PC-3 (cell line): ENCODE measurements at regions of chr14 and their contacts with region 1.

Region 1: GRCh38 chr14:60349663-60350365 is 100.8 kb downstream of the PPM1A start:
- DNase-seq: peak; percentile 90
- ATAC-seq: peak; percentile 82
- H3K4me3 ChIP-seq: no peak overlapping the region
- H3K27ac ChIP-seq: no peak overlapping the region
- H3K4me1 ChIP-seq: no peaks in the 10 kb centered on the region
- H3K27me3 ChIP-seq: peaks cover 15% of the 10 kb centered on the region
- CTCF ChIP-seq: peak; percentile 99

Region 2: GRCh38 chr14:60195179-60195810 is 154.5 kb before region 1 on chr14:
- CTCF ChIA-PET with region 1: no interaction called
- POLR2A ChIA-PET with region 1: no interaction called
- intact Hi-C with region 1: loop called (anchors 5 kb)
- DNase-seq: no peak
- ATAC-seq: peak; percentile 35
- H3K4me3 ChIP-seq: no peak overlapping the region
- H3K27ac ChIP-seq: no peak overlapping the region
- H3K4me1 ChIP-seq: peaks cover 26% of the 10 kb centered on the region
- H3K27me3 ChIP-seq: no peaks in the 10 kb centered on the region
- CTCF ChIP-seq: peak; percentile 49

Region 3: DNA sequence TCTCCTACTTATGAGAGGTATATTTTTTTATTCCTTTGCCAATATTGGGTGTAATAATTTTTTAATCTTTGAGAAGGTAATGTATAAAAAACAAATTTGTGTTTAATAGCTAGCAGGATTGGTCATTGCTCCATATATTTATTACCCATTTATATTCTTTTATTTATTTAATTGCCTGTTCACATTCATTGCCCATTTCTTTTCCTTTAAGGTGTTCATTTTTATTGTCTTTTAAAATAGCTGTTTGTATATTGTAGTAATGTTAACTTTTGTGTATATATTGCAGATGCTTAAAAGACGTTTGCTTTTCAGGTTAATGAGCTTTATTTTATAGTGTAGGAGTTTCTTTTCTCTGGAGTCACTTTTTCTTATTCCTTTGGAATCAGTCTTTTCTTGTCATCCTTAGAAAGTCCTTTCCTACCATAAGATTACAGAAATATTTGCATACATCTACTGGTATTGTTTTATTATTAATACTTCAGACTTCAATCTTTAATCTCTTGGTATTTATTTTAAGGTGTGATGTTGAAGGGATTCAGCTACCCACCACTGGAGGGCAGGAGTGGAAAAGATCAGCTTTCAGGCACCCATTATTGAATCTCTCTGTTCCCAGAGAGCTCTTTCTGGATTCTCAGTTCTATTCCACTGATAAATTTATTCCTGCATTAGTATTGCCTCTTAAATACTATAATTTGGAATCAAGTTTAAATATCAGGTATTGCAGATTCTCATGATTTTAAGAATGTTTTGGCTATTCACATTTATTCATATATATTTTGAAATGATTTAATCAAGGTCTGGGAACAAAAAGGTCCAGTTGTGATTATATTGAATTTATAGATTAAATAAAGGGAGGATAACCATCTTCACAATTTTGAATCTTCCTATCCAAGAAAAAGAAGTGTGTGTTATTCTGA is 83.5 kb before region 1 on chr14:
- CTCF ChIA-PET with region 1: interaction called, 10 read pairs
- POLR2A ChIA-PET with region 1: no interaction called
- intact Hi-C with region 1: loop called (anchors 1 kb)
- DNase-seq: peak; percentile 82
- ATAC-seq: peak; percentile 94
- H3K4me3 ChIP-seq: no peak overlapping the region
- H3K27ac ChIP-seq: no peak overlapping the region
- H3K4me1 ChIP-seq: peaks cover 5% of the 10 kb centered on the region; the same call in 1 of the 2 replicates
- H3K27me3 ChIP-seq: no peaks in the 10 kb centered on the region
- CTCF ChIP-seq: peak; percentile 100

Region 4: DNA sequence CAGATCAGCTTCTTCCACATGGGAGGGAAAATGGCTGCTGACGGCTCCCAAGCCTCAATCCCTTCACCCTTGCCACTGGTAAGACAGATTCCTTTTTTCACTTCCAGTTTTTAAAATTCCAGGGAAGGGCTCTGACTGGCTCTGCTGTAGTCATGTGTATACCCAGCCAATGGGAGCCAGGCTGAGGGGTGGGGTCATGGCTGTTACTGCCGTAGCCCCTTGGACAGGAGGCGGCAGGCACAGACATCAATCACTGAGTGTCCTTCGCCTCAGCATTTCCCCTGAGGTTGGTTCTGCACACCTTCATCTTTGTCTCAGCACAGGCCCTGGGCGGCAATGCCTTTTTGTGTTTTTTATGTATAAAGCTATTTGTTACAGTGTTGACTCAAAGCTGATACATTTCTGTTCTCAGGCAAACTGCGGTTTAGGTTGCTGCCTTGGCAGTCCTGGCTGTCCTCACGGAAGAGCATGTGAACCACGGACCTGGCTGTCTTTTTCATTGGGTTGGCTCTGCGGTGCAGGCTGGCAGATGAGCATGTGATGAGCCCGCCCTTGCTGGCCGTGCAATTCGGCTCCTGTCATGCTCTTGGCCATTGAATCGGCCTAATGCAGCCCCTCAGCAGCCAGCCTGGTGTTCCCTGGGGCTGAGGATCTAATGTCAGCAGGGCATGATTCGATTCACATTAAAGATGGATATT is 26.5 kb before region 1 on chr14:
- CTCF ChIA-PET with region 1: interaction called, 4 read pairs
- POLR2A ChIA-PET with region 1: interaction called, 13 read pairs
- intact Hi-C with region 1: no loop called
- DNase-seq: peak; percentile 49
- ATAC-seq: peak; percentile 18; the same call in 1 of the 2 replicates
- H3K4me3 ChIP-seq: no peak overlapping the region
- H3K27ac ChIP-seq: no peak overlapping the region
- H3K4me1 ChIP-seq: no peaks in the 10 kb centered on the region
- H3K27me3 ChIP-seq: peaks cover 37% of the 10 kb centered on the region
- CTCF ChIP-seq: no peak

Region 5: GRCh38 chr14:60485598-60486251 is 135.9 kb after region 1 on chr14 and contains the start of gene C14orf39:
- CTCF ChIA-PET with region 1: interaction called, 3 read pairs
- POLR2A ChIA-PET with region 1: interaction called, 4 read pairs
- intact Hi-C with region 1: loop called (anchors 1 kb)
- DNase-seq: peak; percentile 65
- ATAC-seq: peak; percentile 75
- H3K4me3 ChIP-seq: peak within 1 kb of the TSS; percentile 57
- H3K27ac ChIP-seq: no peak within 1 kb of the TSS
- H3K4me1 ChIP-seq: peaks cover 12% of the 10 kb centered on the region; the same call in 1 of the 2 replicates
- H3K27me3 ChIP-seq: peaks cover 19% of the 10 kb centered on the region; the same call in 1 of the 2 replicates
- CTCF ChIP-seq: no peak
- total RNA-seq, gene C14orf39: 0.17 and 0.47 TPM in 2 replicates

Region 6: GRCh38 chr14:61287196-61287595 is 937.4 kb after region 1 on chr14:
- CTCF ChIA-PET with region 1: no interaction called
- POLR2A ChIA-PET with region 1: no interaction called
- intact Hi-C with region 1: loop called (anchors 5 kb)
- DNase-seq: peak; percentile 40
- ATAC-seq: no peak
- H3K4me3 ChIP-seq: no peak overlapping the region
- H3K27ac ChIP-seq: no peak overlapping the region
- H3K4me1 ChIP-seq: peaks cover 45% of the 10 kb centered on the region
- H3K27me3 ChIP-seq: no peaks in the 10 kb centered on the region
- CTCF ChIP-seq: no peak